Panc1 (cell line): ENCODE measurements at regions of chr3 and their contacts with region 1.

Region 1: DNA sequence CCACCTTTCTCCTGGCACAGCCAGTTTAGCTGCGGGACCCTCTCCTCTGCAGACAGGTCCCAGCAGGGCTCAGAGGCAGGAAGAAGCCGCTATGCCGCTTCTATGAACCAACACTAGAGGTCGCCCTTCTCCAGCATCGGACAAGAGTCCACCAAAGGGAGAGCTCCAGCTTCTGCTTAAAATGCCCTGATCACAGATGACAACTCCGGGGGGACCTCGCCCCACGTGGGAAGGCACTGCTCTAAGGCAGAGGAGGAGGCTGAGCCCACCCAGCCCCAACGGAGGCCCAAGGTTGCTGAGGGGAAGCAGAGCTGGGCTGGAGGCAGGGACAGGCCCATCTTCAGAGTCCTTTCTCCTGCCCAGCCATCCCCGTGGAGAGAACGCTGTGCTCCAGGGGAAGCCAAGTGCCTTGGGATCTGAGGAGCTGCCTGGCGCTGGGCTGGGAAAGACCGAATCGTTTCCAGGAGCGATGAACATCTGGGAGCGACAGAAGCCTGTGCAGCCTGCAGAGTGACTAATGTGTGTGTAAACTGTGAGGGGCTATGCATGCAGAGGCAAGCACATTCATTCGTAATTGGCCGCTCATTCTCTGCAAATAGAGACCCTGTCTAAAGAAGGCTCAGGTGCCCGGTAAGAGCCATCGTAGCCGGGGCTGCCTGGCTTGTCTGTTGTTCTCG is 43.5 kb upstream of the BDH1 start:
- DNase-seq: peak; percentile 51
- ATAC-seq: peak; percentile 97
- H3K4me3 ChIP-seq: peak overlapping the region; percentile 24 to 50
- H3K27ac ChIP-seq: no peak overlapping the region
- H3K4me1 ChIP-seq: peaks cover 9% of the 10 kb centered on the region; the same call in 1 of the 2 replicates
- H3K27me3 ChIP-seq: 0 out of 2 replicates have a peak, but pooled peaks cover 3% of the 10 kb centered on the region
- CTCF ChIP-seq: peak; percentile 97

Region 2: GRCh38 chr3:196867507-196868296 is 731.5 kb before region 1 on chr3 and contains the start of gene SENP5:
- CTCF ChIA-PET with region 1: no interaction called
- POLR2A ChIA-PET with region 1: interaction called, 12 read pairs
- in situ Hi-C with region 1: no loop called
- intact Hi-C with region 1: no loop called
- DNase-seq: peak; percentile 33
- ATAC-seq: peak; percentile 98
- H3K4me3 ChIP-seq: peak within 1 kb of the TSS; percentile 83 to 96
- H3K27ac ChIP-seq: peak within 1 kb of the TSS; percentile 97
- H3K4me1 ChIP-seq: peaks cover 14% of the 10 kb centered on the region
- H3K27me3 ChIP-seq: no peaks in the 10 kb centered on the region
- CTCF ChIP-seq: no peak
- total RNA-seq, gene SENP5: 40.0 TPM

Region 3: DNA sequence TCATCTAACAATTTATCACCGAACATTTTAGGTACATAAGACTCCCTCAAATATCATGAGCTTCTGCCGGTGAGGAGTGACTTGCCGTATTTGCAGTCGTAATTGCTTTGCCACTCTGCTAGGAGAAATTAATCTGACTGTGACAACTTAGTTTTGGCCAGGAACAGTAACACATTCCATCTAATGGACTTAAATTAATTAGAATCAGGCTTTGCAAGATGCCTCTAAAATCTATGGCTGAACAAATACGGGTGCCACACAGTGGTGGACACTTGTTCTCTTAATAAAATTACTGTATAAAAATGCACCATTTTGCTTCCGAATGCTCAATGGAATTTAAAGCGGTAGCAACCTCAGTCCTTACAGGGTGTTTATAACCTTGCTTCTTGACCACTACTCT is 15.9 kb before region 1 on chr3:
- CTCF ChIA-PET with region 1: interaction called, 12 read pairs
- POLR2A ChIA-PET with region 1: no interaction called
- in situ Hi-C with region 1: no loop called
- intact Hi-C with region 1: no loop called
- DNase-seq: no peak
- ATAC-seq: no peak
- H3K4me3 ChIP-seq: no peak overlapping the region
- H3K27ac ChIP-seq: no peak overlapping the region
- H3K4me1 ChIP-seq: no peaks in the 10 kb centered on the region
- H3K27me3 ChIP-seq: no peaks in the 10 kb centered on the region; the same call in 1 of the 2 replicates
- CTCF ChIP-seq: no peak

Region 4: GRCh38 chr3:197613199-197613598 is 14.0 kb after region 1 on chr3:
- CTCF ChIA-PET with region 1: interaction called, 13 read pairs
- POLR2A ChIA-PET with region 1: interaction called, 6 read pairs
- in situ Hi-C with region 1: no loop called
- intact Hi-C with region 1: no loop called
- DNase-seq: no peak
- ATAC-seq: 0 out of 2 replicates have a peak, but pooled peaks have one; percentile 26
- H3K4me3 ChIP-seq: no peak overlapping the region
- H3K27ac ChIP-seq: no peak overlapping the region
- H3K4me1 ChIP-seq: no peaks in the 10 kb centered on the region
- H3K27me3 ChIP-seq: no peaks in the 10 kb centered on the region
- CTCF ChIP-seq: no peak

Region 5: DNA sequence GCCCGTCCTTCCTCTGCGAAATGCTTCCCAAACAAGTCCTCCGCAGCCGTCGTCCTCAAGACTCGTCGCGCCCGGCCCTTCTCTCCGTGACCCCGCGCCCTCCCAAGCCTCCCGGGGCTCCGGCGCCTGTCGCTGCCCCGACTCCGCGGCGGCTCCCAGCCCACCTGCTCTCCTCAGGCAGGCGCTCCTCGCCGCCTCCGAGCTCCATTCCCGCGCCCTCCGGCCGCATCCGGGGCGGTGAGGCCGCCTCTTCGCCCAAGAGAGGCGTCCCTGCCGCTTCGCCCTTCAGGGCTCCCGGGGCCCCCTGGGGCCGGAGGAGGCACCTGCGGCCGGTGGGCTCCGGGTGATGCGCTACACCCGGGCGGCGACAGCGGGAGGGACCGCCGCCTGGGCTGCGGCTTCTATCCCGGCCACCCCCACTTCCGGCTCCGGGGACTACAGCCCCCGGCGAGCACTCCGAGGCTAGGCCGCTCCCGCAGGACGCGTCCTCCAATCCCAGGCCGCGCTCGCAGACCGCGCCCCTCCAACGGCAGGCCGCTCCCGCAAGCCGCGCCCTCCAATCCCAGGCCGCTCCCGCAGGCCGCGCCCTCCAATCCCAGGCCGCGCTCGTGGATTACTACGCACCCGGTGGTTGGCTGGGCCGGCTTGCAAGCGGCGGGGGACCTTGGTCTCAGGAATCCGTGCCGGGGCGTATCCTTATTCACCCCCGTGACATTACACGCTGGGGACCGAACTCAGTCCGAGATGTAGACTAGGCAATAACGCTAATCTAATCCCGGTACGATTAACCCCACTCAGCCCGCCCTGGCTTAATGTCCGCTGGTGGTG is 137.5 kb after region 1 on chr3 and contains the start of gene RUBCN:
- CTCF ChIA-PET with region 1: no interaction called
- POLR2A ChIA-PET with region 1: no interaction called
- in situ Hi-C with region 1: loop called (anchors 10 kb)
- intact Hi-C with region 1: no loop called
- DNase-seq: no peak
- ATAC-seq: peak; percentile 99
- H3K4me3 ChIP-seq: peak within 1 kb of the TSS; percentile 67 to 98
- H3K27ac ChIP-seq: peak within 1 kb of the TSS; percentile 90
- H3K4me1 ChIP-seq: peaks cover 23% of the 10 kb centered on the region
- H3K27me3 ChIP-seq: no peaks in the 10 kb centered on the region
- CTCF ChIP-seq: no peak
- total RNA-seq, gene RUBCN: 37.9 TPM